ENCODE measurements at regions of chr2 and their contacts with region 1.

Region 1: GRCh38 chr2:43086451-43087221 is 139.8 kb downstream of the ZFP36L2 start:
- DNase-seq: peak; percentile 88 to 100
- H3K4me3 ChIP-seq: no peak overlapping the region
- H3K27ac ChIP-seq: peak overlapping the region; percentile 85
- H3K4me1 ChIP-seq: peaks cover 68% of the 10 kb centered on the region
- H3K27me3 ChIP-seq: no peaks in the 10 kb centered on the region
- CTCF ChIP-seq: no peak

Region 2: DNA sequence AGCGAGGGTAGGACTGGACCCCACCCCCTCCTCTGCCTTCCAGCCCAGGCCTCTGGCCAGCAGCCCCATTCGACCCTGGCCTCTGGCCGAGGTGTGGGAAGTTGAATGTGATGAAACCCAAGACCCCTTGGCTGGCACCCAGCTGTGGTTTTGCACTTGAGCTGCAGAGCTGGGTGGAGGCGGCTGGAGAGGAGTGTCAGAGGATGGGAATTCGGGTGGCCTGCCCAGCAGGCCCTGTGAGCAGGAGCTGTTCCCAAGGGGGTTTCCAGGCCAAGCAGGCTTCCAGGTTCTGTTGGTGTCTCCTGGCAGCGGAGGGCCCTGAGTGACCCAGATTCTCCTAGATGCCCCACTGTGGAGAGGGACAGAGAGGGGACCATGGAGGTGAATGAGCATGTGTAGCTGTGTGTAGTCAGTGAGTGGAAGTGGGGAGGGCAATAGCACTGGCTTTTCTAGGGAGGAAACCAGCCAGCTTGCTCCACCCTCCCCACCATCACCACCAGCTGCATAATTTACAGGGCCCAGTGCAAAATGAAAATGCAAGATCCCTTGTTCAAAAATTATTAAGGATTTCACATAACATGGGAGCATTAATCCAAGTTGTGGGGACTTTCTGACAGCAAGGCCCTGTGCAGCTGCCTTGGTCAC is 122.1 kb before region 1 on chr2:
- CTCF ChIA-PET with region 1: no interaction called
- POLR2A ChIA-PET with region 1: no interaction called
- intact Hi-C with region 1: loop called (anchors 5 kb)
- DNase-seq: peak; percentile 86 to 88
- H3K4me3 ChIP-seq: no peak overlapping the region
- H3K27ac ChIP-seq: peak overlapping the region; percentile 51
- H3K4me1 ChIP-seq: peaks cover 48% of the 10 kb centered on the region
- H3K27me3 ChIP-seq: no peaks in the 10 kb centered on the region
- CTCF ChIP-seq: no peak

Region 3: DNA sequence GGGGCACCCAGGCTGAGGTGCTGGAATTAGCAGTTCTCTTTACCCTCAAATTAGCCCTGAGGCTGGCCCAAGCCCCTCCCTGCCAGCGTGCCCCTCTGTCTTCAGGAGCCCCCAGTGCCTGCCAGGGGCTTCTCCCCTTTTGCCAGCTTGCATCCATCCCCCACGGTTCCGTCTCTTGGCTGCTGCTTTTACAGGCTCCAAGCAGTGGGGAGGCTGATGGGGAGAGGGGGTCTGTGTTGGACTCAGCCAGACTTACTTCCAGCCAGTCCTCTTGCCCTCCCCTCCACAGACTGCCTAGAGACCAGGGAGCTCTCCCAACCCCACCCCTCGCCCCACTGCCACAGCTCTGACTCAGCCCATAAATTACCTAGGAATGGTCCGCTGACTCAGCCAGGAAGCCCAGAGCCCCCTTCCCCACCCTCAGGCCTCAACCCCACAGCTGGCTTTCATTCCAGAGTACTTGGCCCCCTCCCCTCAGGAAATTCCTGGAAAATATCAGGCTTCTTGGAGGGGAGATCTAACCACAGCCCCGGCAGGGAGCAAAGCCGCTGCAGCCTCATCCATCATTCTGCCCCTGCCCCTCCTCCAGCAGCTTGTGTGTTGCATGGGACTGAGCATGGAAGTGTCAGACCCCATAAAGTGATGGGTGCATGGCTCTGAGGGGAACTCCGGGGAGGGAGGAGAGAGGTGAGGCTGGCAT is 44.8 kb before region 1 on chr2:
- CTCF ChIA-PET with region 1: no interaction called
- POLR2A ChIA-PET with region 1: no interaction called
- intact Hi-C with region 1: loop called (anchors 1 kb)
- DNase-seq: peak; percentile 93 to 95
- H3K4me3 ChIP-seq: peak overlapping the region; percentile 19; the same call in 1 of the 2 replicates
- H3K27ac ChIP-seq: peak overlapping the region; percentile 90
- H3K4me1 ChIP-seq: peaks cover 79% of the 10 kb centered on the region
- H3K27me3 ChIP-seq: no peaks in the 10 kb centered on the region
- CTCF ChIP-seq: no peak

Region 4: GRCh38 chr2:43051316-43051715 is 35.3 kb before region 1 on chr2:
- CTCF ChIA-PET with region 1: interaction called, 5 read pairs
- POLR2A ChIA-PET with region 1: no interaction called
- intact Hi-C with region 1: loop called (anchors 1 kb)
- DNase-seq: peak; percentile 74 to 91
- H3K4me3 ChIP-seq: no peak overlapping the region
- H3K27ac ChIP-seq: peak overlapping the region; percentile 19; the same call in 1 of the 2 replicates
- H3K4me1 ChIP-seq: peaks cover 57% of the 10 kb centered on the region
- H3K27me3 ChIP-seq: no peaks in the 10 kb centered on the region
- CTCF ChIP-seq: no peak

Region 5: GRCh38 chr2:43070039-43070438 is 16.6 kb before region 1 on chr2:
- CTCF ChIA-PET with region 1: interaction called, 4 read pairs
- POLR2A ChIA-PET with region 1: no interaction called
- intact Hi-C with region 1: loop called (anchors 1 kb)
- DNase-seq: peak; percentile 94 to 98
- H3K4me3 ChIP-seq: no peak overlapping the region
- H3K27ac ChIP-seq: peak overlapping the region; percentile 93
- H3K4me1 ChIP-seq: peaks cover 84% of the 10 kb centered on the region
- H3K27me3 ChIP-seq: no peaks in the 10 kb centered on the region
- CTCF ChIP-seq: no peak; the same call in 1 of the 2 replicates

Region 6: DNA sequence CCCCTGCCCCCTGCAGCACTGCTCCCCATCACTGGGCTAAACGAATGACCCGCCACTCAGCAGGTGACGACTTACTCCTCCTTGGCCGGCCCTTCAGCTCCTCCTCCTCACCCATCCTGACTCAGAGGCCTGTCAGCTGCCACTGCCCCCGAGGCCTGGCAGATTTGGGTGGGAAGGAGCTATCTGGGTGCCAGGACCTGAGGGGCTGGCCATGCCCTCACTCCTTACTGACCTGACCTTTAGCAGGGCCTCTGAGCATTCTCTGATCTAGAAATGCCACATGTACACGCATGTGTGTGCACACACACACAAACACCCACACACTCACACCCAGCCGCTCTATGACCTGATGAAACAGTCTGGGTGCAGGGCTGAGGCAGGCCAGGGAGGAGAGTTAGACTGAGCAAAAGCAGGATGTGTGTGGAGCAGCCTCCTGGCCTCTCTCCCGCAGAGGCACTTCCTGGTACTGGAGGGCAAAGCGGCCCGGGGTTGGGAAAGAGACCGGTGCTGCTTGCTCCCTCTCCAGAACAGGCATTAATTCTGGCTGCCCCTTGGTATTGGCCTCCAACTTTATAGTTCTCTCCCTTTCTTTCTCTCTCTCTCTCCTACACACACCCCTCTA is 71.7 kb after region 1 on chr2:
- CTCF ChIA-PET with region 1: no interaction called
- POLR2A ChIA-PET with region 1: no interaction called
- intact Hi-C with region 1: loop called (anchors 1 kb)
- DNase-seq: peak; percentile 75 to 88
- H3K4me3 ChIP-seq: peak overlapping the region; percentile 22; the same call in 1 of the 2 replicates
- H3K27ac ChIP-seq: peak overlapping the region; percentile 95
- H3K4me1 ChIP-seq: peaks cover 55% of the 10 kb centered on the region
- H3K27me3 ChIP-seq: no peaks in the 10 kb centered on the region
- CTCF ChIP-seq: no peak

Region 7: GRCh38 chr2:43169987-43170386 is 83.4 kb after region 1 on chr2:
- CTCF ChIA-PET with region 1: no interaction called
- POLR2A ChIA-PET with region 1: interaction called, 11 read pairs
- intact Hi-C with region 1: no loop called
- DNase-seq: peak; percentile 38 to 50
- H3K4me3 ChIP-seq: peak overlapping the region; percentile 53; the same call in 1 of the 2 replicates
- H3K27ac ChIP-seq: peak overlapping the region; percentile 97
- H3K4me1 ChIP-seq: peaks cover 74% of the 10 kb centered on the region
- H3K27me3 ChIP-seq: no peaks in the 10 kb centered on the region
- CTCF ChIP-seq: peak; percentile 96